GM12878 (cell line): ENCODE measurements at regions of chrX and their contacts with region 1.

Region 1: GRCh38 chrX:19772826-19773628 is 114.4 kb downstream of the SH3KBP1 start:
- DNase-seq: no peak
- ATAC-seq: peak; percentile 64
- H3K4me3 ChIP-seq: peak overlapping the region; percentile 2; the same call in 1 of the 2 replicates
- H3K27ac ChIP-seq: peak overlapping the region; percentile 90
- H3K4me1 ChIP-seq: peaks cover 61% of the 10 kb centered on the region
- H3K27me3 ChIP-seq: no peaks in the 10 kb centered on the region
- CTCF ChIP-seq: no peak
- EP300 ChIP-seq: peak in 1 of 2 experiments; percentile 24; a peak in 1 of 4 replicates
- POLR2A ChIP-seq: no peak
- RAD21 ChIP-seq: no peak

Region 2: GRCh38 chrX:19649226-19649995 is 123.6 kb before region 1 on chrX:
- CTCF ChIA-PET with region 1: no interaction called
- POLR2A ChIA-PET with region 1: no interaction called
- RAD21 ChIA-PET with region 1: no interaction called
- SMC1A ChIA-PET with region 1: no interaction called
- in situ Hi-C with region 1: no loop called
- intact Hi-C with region 1: no loop called
- DNase-seq: no peak
- ATAC-seq: no peak
- H3K4me3 ChIP-seq: no peak overlapping the region
- H3K27ac ChIP-seq: no peak overlapping the region
- H3K4me1 ChIP-seq: no peaks in the 10 kb centered on the region
- H3K27me3 ChIP-seq: no peaks in the 10 kb centered on the region
- CTCF ChIP-seq: no peak
- EP300 ChIP-seq: no peak
- POLR2A ChIP-seq: no peak
- RAD21 ChIP-seq: no peak

Region 3: DNA sequence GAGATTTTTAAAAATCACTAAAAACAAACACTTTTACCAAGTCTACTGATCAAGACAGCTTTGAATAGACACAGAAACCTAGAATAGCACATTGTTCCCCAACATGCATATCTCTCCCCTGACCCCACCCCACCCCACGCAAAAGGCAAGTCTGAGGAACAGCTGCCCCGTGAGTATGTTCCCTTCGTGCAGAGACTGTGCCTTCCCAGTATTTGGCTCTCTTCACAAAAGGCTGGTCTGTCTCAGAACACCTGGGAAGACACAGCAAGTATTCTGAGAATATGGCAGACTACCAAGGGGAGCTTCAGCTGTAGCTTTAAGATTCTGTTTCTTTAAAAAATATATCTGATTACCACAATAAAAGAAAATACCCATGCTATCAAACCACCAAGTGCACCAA is 19.7 kb before region 1 on chrX:
- CTCF ChIA-PET with region 1: interaction called, 16 read pairs
- POLR2A ChIA-PET with region 1: interaction called, 13 read pairs
- RAD21 ChIA-PET with region 1: interaction called, 80 read pairs
- SMC1A ChIA-PET with region 1: interaction called, 624 read pairs
- in situ Hi-C with region 1: no loop called
- intact Hi-C with region 1: loop called (anchors 2 kb)
- DNase-seq: no peak
- ATAC-seq: no peak
- H3K4me3 ChIP-seq: no peak overlapping the region
- H3K27ac ChIP-seq: peak overlapping the region; percentile 50; the same call in 1 of the 2 replicates
- H3K4me1 ChIP-seq: peaks cover 40% of the 10 kb centered on the region
- H3K27me3 ChIP-seq: no peaks in the 10 kb centered on the region
- CTCF ChIP-seq: no peak
- EP300 ChIP-seq: no peak
- POLR2A ChIP-seq: no peak
- RAD21 ChIP-seq: no peak

Region 4: DNA sequence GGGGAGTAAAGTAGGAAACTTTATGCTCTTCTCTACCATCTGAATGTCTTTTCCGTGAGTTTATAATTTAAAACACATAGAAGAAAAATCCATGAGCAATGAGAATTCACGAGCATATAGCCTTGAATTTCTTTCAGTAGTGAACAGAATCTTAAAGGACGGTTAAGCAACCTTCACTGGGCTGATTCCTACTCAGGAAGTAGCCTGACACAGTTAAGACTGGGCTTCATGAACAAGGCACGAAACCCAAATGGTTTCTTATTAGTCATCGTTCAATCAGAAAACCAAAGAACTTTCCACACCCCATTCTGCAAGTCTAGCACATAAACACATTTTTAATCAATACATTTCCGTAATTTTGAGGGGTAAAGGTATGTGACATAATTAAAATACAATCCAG is 18.5 kb after region 1 on chrX:
- CTCF ChIA-PET with region 1: interaction called, 4 read pairs
- POLR2A ChIA-PET with region 1: interaction called, 23 read pairs
- RAD21 ChIA-PET with region 1: interaction called, 6 read pairs
- SMC1A ChIA-PET with region 1: interaction called, 83 read pairs
- in situ Hi-C with region 1: no loop called
- intact Hi-C with region 1: loop called (anchors 2 kb)
- DNase-seq: no peak
- ATAC-seq: peak; percentile 76
- H3K4me3 ChIP-seq: 0 out of 2 replicates have a peak overlapping the region, but pooled peaks have one; percentile 11
- H3K27ac ChIP-seq: peak overlapping the region; percentile 69
- H3K4me1 ChIP-seq: peaks cover 17% of the 10 kb centered on the region
- H3K27me3 ChIP-seq: no peaks in the 10 kb centered on the region
- CTCF ChIP-seq: no peak
- EP300 ChIP-seq: no peak
- POLR2A ChIP-seq: no peak
- RAD21 ChIP-seq: no peak

Region 5: DNA sequence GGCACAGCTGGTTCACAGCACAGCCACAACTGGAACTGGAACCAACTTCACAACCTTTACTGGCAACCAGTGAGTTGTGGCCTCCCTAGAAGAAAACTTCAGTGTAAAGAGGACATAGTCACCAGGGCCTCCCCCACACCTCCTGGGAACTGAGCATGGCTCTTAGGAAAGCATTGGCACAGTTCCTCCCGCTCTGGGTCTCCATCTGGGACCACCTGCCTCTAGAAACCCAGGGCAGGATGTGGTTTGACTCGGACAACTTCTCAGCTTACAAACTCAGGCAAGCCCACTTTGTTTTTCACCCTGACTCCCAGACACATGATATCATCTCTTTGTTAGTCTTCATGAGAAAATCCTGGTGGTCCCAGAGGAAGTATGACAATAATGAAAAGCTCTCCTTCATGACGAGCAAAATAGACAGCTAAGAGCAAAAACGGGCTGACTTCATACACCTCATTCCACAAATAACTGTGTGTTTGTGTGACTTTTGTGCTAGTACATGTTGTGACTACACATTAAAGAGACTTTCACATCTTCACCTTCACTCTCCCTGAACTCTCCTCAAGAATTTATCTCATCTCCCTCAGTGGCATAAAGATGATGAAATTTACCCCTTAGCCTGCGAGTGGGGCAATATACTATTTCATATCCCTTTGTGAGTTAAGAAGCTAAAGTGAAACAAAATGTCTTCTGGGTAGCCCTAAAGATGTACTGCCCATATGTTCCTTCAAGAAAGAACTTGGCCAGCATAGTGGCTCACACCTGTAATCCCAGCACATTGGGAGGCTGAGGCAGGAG is 39.0 kb after region 1 on chrX:
- CTCF ChIA-PET with region 1: interaction called, 8 read pairs
- POLR2A ChIA-PET with region 1: interaction called, 5 read pairs
- RAD21 ChIA-PET with region 1: interaction called, 20 read pairs
- SMC1A ChIA-PET with region 1: interaction called, 49 read pairs
- in situ Hi-C with region 1: no loop called
- intact Hi-C with region 1: no loop called
- DNase-seq: no peak
- ATAC-seq: peak; percentile 41
- H3K4me3 ChIP-seq: no peak overlapping the region
- H3K27ac ChIP-seq: peak overlapping the region; percentile 87
- H3K4me1 ChIP-seq: peaks cover 30% of the 10 kb centered on the region
- H3K27me3 ChIP-seq: no peaks in the 10 kb centered on the region
- CTCF ChIP-seq: no peak
- EP300 ChIP-seq: no peak
- POLR2A ChIP-seq: no peak
- RAD21 ChIP-seq: no peak

Region 6: DNA sequence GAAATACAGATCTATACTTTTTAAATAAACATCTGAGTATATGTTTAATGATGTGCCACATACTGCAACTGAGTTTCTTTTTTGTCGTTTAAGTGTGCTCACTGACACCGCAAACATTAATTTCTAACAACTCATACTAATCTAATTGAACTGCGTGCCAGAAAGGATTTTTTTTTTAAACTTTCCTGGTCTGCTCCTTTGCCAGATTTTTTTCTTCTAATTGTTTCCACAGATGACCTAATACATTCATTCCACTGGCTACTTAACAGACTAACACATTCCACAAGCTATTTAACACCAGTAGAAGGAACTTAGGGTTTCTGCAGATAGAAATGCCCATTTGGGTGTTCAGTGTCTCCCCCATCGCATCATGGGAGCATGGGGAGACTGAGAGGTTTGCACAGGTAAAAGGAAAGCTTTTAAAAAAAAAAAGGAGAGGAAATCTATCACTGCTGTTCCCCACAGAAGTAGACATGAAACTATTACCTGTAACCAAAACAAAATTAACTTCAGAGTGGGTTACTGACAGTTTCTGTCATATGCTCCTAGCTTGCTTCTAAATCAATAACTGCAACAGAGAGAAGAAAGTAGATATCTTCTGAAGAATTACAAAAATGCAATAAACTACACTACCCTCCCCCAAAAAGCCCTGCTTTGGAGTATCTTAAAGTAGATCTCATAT is 82.8 kb after region 1 on chrX:
- CTCF ChIA-PET with region 1: interaction called, 3 read pairs
- POLR2A ChIA-PET with region 1: interaction called, 7 read pairs
- RAD21 ChIA-PET with region 1: interaction called, 23 read pairs
- SMC1A ChIA-PET with region 1: interaction called, 12 read pairs
- in situ Hi-C with region 1: no loop called
- intact Hi-C with region 1: no loop called
- DNase-seq: no peak
- ATAC-seq: peak; percentile 36
- H3K4me3 ChIP-seq: no peak overlapping the region
- H3K27ac ChIP-seq: peak overlapping the region; percentile 88
- H3K4me1 ChIP-seq: peaks cover 21% of the 10 kb centered on the region
- H3K27me3 ChIP-seq: no peaks in the 10 kb centered on the region
- CTCF ChIP-seq: no peak
- EP300 ChIP-seq: no peak
- POLR2A ChIP-seq: no peak
- RAD21 ChIP-seq: no peak